Right cardiac atrium (tissue), 5 donors: ENCODE measurements at regions of chr14 and their contacts with region 1.

Region 1: GRCh38 chr14:21014761-21015190 is 10.1 kb downstream of the NDRG2 start:
- DNase-seq: peak; percentile 78 to 87 (median 86)
- ATAC-seq: peak; percentile 80 to 83
- H3K4me3 ChIP-seq: no peak overlapping the region
- H3K27ac ChIP-seq: peak overlapping the region; percentile 8
- H3K4me1 ChIP-seq: no peaks in the 10 kb centered on the region
- H3K27me3 ChIP-seq: no peaks in the 10 kb centered on the region

Region 2: DNA sequence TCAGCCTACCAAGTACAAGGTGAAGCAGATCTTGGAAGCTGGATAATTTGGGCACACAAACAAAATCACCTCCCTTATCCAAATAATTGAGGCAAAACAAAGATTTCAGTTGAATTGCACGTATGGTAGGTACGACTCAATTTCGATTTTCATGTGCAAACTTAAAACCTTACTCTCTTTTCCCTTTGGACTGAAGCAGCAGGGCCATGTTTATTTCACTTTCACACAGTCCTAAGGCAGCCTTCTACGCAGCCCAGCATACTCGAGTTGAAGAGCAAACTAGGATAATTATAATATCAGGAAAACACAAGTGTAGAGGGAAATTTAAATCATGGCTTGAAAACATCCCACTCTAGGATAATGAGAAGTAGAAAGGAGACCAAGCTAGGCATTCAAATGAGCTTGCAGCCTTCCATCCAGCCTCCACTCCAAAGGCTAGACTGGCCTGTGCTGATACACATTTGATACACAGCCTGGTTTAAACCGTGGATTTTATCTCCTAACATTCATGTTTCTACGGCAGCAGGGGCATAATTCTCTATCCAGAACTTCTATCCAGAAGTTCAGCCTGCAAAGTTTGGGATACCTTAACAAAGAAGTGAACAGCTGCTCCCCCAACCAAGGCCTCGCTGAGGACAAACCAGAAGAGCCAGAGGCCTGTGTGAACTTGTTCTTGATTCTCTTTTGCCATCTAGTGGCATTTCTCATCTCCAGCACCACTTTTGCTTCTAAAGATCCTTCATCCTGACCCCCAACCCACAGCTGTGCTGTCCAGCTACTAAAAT is 25.0 kb after region 1 on chr14:
- intact Hi-C with region 1: loop called in 2 of 4 experiments (anchors 1 to 2 kb)
- DNase-seq: peak in 2 of 3 donors; percentile 58 to 67
- ATAC-seq: peak; percentile 74 to 78
- H3K4me3 ChIP-seq: no peak overlapping the region
- H3K27ac ChIP-seq: peak overlapping the region; percentile 70
- H3K4me1 ChIP-seq: peaks cover 22% of the 10 kb centered on the region
- H3K27me3 ChIP-seq: no peaks in the 10 kb centered on the region

Region 3: DNA sequence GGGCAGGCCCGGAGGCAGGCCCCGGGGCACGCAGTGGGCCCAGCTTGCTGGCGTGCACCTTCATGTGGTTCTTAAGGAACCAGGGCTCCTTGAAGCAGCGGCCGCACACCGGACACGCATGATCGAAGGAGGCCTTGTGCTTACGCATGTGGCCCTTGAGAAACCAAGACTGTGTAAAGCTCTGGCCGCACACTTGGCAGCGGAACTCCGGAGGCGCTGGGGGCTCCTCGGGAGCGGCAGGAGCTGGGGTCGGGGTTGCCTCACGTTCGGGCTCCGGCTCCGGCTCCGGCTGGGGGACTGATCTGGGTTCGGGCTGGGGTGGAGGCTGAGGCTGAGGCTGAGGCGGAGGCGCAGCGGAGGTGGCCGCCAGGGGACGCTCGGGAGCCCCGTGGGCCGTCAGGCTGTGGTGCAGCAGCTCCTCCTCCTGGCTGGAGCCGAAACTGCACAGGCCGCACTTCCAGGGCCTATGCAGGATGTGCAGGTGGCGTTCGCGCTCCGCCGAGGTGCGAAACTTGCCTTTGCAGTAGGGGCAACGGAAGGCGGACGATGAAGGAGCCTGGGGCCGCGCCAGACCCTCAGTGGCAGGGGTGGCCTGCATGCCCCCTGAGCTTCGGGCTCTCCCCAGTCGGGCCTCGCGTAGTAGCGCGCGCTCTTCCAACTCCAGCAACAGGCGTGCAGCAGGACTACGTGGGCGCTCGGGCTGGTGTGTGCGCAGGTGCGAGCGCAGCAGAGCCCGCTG is 77.7 kb after region 1 on chr14:
- intact Hi-C with region 1: loop called (anchors 2 to 5 kb)
- DNase-seq: peak; percentile 84 to 95 (median 95)
- ATAC-seq: peak; percentile 72 to 84
- H3K4me3 ChIP-seq: no peak overlapping the region
- H3K27ac ChIP-seq: no peak overlapping the region
- H3K4me1 ChIP-seq: peaks cover 3% of the 10 kb centered on the region
- H3K27me3 ChIP-seq: no peaks in the 10 kb centered on the region

Region 4: GRCh38 chr14:21103710-21104447 is 89.1 kb after region 1 on chr14:
- intact Hi-C with region 1: loop called in 1 of 4 experiments (anchors 2 kb)
- DNase-seq: peak; percentile 97 to 99 (median 97)
- ATAC-seq: peak; percentile 96 to 97
- H3K4me3 ChIP-seq: peak overlapping the region; percentile 54
- H3K27ac ChIP-seq: peak overlapping the region; percentile 92
- H3K4me1 ChIP-seq: no peaks in the 10 kb centered on the region
- H3K27me3 ChIP-seq: no peaks in the 10 kb centered on the region